ENCODE measurements at regions of chr15 and their contacts with region 1.

Region 1: DNA sequence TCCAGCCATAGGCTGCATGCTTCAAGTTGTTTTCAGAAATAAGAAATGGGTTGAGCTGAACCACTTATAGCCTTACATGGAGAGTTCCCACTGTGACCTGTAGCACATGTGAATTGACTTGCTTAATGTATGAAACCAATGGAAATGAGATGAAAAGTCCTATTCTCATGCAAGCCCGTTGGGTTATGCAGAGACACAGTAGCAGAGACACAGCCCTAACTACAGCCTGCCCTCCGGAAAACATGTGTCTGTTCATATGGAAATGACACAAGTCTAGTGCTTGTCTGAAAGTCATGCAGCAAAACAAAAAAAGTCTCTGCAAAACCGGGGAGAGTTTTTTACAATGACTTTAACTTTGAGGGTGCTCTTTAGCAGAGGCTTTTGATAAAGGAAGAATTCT is 14.4 kb downstream of the HIGD2B start:
- DNase-seq: no peak
- H3K4me3 ChIP-seq: no peak overlapping the region
- H3K27ac ChIP-seq: no peak overlapping the region
- H3K4me1 ChIP-seq: no peaks in the 10 kb centered on the region
- H3K27me3 ChIP-seq: no peaks in the 10 kb centered on the region
- CTCF ChIP-seq: no peak

Region 2: DNA sequence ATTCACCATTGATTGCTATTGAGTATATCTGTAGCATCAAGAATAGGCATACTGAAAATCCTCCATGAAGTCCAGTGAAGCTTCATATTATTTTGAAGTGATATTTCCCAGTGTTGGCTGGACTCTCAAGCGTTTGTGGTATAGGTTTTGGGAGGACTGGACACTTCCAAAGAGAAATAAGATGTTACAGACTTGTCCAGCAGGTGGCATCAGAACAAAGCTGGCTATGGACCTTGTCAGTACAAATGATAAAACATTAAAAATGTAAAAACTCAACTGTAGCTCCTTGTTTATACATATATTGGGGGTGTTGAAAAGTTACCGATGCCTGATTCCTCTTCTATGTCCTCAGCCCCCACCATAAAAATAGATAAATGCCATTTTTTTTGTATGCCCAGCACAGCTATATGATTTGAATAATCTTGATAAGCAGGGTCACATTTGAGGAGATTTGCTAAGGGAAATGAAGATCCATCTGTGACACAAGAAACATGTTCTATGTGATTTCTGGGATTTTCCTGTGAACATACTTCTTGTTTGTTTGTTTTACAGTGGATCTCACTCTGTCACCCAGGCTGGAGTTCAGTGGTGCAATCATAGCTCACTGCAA is 71.6 kb before region 1 on chr15:
- intact Hi-C with region 1: loop called (anchors 10 kb)
- DNase-seq: peak; percentile 36
- H3K4me3 ChIP-seq: no peak overlapping the region
- H3K27ac ChIP-seq: no peak overlapping the region
- H3K4me1 ChIP-seq: no peaks in the 10 kb centered on the region
- H3K27me3 ChIP-seq: no peaks in the 10 kb centered on the region
- CTCF ChIP-seq: peak; percentile 41

Region 3: DNA sequence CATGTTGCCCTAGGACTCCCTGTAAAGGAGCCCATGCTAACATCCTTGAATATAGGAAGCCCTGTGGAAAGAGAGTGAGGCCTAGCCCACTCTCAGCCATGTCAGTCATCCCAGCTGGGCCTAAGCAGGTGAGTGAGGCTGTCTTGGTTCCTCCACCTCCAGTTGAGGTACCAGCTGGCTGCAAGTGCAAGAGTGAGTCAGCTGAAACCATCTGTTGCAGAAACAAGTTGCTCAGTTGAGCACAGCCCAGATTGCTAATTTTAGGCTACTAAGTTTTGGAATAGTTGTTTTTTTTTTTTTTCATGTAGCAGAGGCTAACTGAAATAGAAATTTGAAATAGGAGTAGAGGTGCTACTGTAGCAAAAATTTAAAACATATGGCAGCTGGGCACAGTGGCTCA is 155.7 kb after region 1 on chr15:
- intact Hi-C with region 1: no loop called
- DNase-seq: no peak
- H3K4me3 ChIP-seq: no peak overlapping the region
- H3K27ac ChIP-seq: no peak overlapping the region
- H3K4me1 ChIP-seq: no peaks in the 10 kb centered on the region
- H3K27me3 ChIP-seq: no peaks in the 10 kb centered on the region
- CTCF ChIP-seq: no peak